Posterior cingulate gyrus (tissue), 11 donors: ENCODE measurements at regions of chr12 and their contacts with region 1.

Region 1: DNA sequence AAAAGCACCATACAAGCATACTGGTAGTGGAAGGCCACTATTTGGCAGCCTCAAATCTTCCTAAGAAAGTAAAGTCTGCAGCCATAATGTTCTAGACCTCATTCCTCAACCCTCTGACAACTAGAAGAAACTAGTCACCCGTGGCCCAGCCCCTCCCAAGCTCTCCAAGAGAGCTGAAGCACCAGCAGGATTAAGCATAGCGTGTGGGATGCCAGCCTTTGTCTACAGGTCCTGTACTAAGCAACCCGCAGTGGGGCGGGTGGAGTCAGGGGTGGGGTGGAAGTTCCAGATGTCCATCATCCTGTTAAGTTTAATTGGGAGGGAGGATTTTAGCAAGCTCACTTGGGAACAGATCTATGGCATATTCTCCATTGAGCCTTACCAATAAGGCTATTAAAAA is 14.2 kb downstream of the SLC11A2 start:
- DNase-seq: no peak

Region 2: GRCh38 chr12:51025836-51026638 is 14.1 kb after region 1 on chr12 and contains the start of gene SLC11A2:
- intact Hi-C with region 1: loop called (anchors 2 kb)
- DNase-seq: peak; percentile 95 to 100 (median 96)